Heart right ventricle (tissue), 16 donors: ENCODE measurements at regions of chrX and their contacts with region 1.

Region 1: DNA sequence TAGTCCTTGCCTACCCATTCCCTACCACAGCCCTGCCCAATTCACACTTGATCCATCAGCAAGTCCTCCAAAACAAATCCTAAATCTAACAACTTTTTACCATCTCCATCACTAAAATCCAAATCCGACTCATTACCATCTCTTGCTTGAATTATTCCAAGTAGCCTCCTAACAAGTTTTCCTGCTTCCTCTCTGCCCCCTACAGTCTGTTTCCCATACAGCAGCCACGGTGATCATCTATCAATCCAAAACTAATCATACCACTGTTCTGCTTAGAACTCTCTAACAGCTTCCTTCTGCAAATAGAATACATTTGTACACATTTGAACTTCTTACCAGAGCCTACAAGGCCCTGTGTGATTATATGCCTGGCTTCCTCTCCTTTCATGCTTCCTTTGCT is 133.0 kb downstream of the SHROOM4 start:
- DNase-seq: no peak
- ATAC-seq: no peak
- H3K4me3 ChIP-seq: no peak overlapping the region
- H3K27ac ChIP-seq: no peak overlapping the region
- H3K4me1 ChIP-seq: peaks cover 0 to 9% (median 0%) of the 10 kb centered on the region in 9 donors
- H3K27me3 ChIP-seq: peaks cover 0 to 72% (median 0%) of the 10 kb centered on the region in 7 donors
- CTCF ChIP-seq: peak in 8 of 9 donors; percentile 18 to 60 (median 48)

Region 2: GRCh38 chrX:50579955-50580354 is 101.0 kb before region 1 on chrX:
- intact Hi-C with region 1: loop called in 3 of 10 experiments (anchors 10 kb)
- DNase-seq: peak in 1 of 2 donors; percentile 18
- ATAC-seq: peak in 1 of 8 donors; percentile 60
- H3K4me3 ChIP-seq: no peak overlapping the region
- H3K27ac ChIP-seq: no peak overlapping the region
- H3K4me1 ChIP-seq: no peaks in the 10 kb centered on the region
- H3K27me3 ChIP-seq: peaks cover 0 to 44% (median 0%) of the 10 kb centered on the region in 7 donors
- CTCF ChIP-seq: peak in 8 of 9 donors; percentile 21 to 64 (median 56)

Region 3: DNA sequence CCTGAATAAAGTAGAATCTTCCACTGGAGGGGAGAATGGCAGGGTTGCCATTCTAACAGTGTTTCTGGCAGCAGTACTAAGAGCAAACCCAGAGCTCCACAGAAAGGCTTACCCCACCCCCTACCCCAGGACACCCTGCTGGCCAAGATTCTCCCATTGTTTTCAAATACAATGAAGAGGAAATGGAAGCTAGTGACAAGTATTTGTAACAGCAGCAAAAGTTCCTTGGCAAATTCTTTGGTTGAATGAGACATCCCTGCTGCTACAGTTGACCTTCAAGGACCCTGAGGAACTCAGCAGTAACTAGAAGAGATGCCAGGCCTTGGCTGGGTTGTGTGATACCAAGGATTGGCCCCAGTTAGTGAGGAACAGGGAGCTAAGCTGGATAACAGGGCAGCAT is 86.2 kb before region 1 on chrX:
- intact Hi-C with region 1: loop called in 4 of 10 experiments (anchors 10 kb)
- DNase-seq: peak in 1 of 2 donors; percentile 27
- ATAC-seq: peak; percentile 59 to 88 (median 82)
- H3K4me3 ChIP-seq: no peak overlapping the region
- H3K27ac ChIP-seq: peak overlapping the region in 7 of 10 donors; percentile 3 to 75 (median 50)
- H3K4me1 ChIP-seq: peaks cover 0 to 25% (median 7%) of the 10 kb centered on the region in 9 donors
- H3K27me3 ChIP-seq: no peaks in the 10 kb centered on the region
- CTCF ChIP-seq: no peak

Region 4: DNA sequence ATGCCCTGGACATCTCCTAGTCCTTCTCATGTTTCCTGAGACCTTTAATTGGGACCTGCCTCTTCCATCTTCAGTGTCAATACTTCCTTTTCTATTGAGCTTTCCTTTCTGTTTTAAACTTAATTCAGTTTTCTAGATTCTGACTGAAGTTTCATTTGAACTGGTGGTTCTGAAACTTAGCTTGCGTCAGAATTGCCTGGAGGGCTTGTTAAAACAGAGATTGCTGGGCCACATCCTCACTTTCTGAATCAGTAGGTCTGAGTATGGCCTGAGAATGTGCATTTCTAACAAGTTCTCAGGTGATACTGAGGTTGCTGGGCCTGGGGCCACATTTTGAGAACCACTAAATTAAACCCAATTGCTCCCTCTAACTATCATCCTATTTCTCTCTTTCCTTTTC is 58.2 kb before region 1 on chrX:
- intact Hi-C with region 1: no loop called
- DNase-seq: no peak
- ATAC-seq: no peak
- H3K4me3 ChIP-seq: no peak overlapping the region
- H3K27ac ChIP-seq: no peak overlapping the region
- H3K4me1 ChIP-seq: peaks cover 0 to 10% (median 2%) of the 10 kb centered on the region in 9 donors
- H3K27me3 ChIP-seq: peaks cover 0 to 18% (median 0%) of the 10 kb centered on the region in 7 donors
- CTCF ChIP-seq: no peak

Region 5: GRCh38 chrX:50643525-50644137 is 37.4 kb before region 1 on chrX:
- intact Hi-C with region 1: loop called in 2 of 10 experiments (anchors 5 kb)
- DNase-seq: peak; percentile 34 to 43
- ATAC-seq: peak; percentile 75 to 89 (median 84)
- H3K4me3 ChIP-seq: peak overlapping the region; percentile 14 to 56 (median 44)
- H3K27ac ChIP-seq: peak overlapping the region in 9 of 10 donors; percentile 50 to 80 (median 68)
- H3K4me1 ChIP-seq: peaks cover 0 to 36% (median 12%) of the 10 kb centered on the region in 9 donors
- H3K27me3 ChIP-seq: peaks cover 0 to under 1% (median 0%) of the 10 kb centered on the region in 7 donors
- CTCF ChIP-seq: no peak

Region 6: DNA sequence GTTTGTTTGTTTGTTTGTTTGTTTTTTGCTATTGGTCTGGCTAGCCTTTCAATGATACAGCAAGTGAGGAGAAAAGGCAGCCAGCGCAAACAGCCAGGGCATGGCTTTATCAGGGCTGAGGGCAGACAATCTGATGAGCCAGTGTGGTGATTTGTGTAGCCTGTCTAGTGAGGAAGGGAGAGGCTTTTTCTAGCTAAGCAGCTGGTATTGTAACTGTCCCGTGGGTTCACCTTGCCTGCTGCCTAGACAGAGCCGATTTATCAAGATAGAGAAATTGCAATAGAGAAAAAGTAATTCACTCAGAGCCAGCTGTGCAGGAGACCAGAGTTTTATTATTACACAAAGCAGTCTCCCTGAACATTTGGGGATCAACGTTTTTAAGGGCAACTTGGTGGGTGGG is 161.2 kb after region 1 on chrX:
- intact Hi-C with region 1: no loop called
- DNase-seq: no peak
- ATAC-seq: no peak
- H3K4me3 ChIP-seq: no peak overlapping the region
- H3K27ac ChIP-seq: no peak overlapping the region
- H3K4me1 ChIP-seq: peaks cover 0 to 2% (median 0%) of the 10 kb centered on the region in 9 donors
- H3K27me3 ChIP-seq: peaks cover 0 to 27% (median 0%) of the 10 kb centered on the region in 7 donors
- CTCF ChIP-seq: no peak